Sciatic nerve (tissue), 2 donors: ENCODE measurements at regions of chr14 and their contacts with region 1.

Region 1: GRCh38 chr14:75752907-75753594 is 92.0 kb downstream of the TTLL5 start:
- DNase-seq: no peak
- ATAC-seq: no peak

Region 2: DNA sequence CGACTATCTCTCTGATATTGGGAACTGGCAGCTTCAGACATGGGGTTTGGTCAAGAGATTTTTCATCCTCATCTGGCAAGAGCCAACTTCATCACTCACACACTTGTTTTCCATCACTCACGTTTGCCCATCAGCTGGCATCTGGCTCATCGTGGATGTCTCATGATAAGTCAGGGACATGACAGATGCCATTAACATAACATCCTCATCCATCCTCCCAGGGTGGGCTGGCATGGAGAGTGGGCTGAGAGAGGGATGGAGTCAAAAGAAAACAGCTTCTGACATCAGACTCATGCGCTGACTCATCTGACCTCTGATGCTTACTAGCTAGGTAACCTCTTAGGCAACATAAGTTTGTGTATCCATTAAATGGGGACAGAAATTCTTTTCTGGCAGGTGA is 1515.6 kb before region 1 on chr14:
- intact Hi-C with region 1: no loop called
- DNase-seq: no peak
- ATAC-seq: no peak

Region 3: GRCh38 chr14:75702616-75703261 is 50.3 kb before region 1 on chr14:
- intact Hi-C with region 1: loop called (anchors 5 kb)
- DNase-seq: no peak
- ATAC-seq: peak; percentile 79